Activated CD4-positive, alpha-beta T cell treated with anti-CD3 and anti-CD28 coated beads, Interleukin-2, amount 10 ng/mL, durations not matched to agents 7 days and 5 days (primary cell): ENCODE measurements at regions of chr17 and their contacts with region 1.

Region 1: DNA sequence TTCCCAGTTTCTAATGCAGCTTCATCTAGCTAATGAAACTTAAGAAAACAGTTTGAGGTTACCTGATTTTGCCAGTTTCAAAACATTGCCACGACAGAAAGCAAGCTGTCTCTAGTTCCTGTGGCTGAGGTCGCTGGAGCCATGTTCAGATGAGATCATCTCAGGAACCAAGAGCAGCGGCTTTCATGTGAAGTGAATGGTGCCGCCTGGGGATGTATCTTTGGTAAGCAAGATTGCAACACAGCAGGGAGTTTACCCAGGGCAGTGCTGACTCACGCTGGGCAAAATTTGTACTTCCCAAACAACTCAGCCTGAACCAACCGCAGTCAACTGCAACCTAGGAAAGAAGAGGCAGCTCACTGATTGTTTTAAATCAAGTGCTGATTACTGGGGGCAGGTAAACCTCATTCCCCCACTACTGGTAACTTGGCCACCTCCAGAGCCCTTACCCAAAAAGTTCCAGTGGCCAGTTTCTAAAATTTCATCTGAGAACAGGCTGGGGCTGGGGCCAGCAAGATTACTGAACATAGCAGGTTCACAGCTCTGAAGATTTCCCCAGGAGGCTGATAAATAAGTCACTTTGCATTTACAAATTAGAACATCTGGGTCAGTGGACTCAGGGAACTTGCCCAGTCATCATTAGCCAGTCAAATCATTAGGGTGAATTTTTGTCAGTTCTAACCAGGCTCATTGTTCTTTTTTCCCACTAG is at the start of gene RFFL:
- DNase-seq: peak; percentile 93
- H3K4me3 Mint-ChIP-seq: peak within 1 kb of the TSS; percentile 49
- H3K27ac Mint-ChIP-seq: peak within 1 kb of the TSS; percentile 93
- H3K4me1 Mint-ChIP-seq: peaks cover 57% of the 10 kb centered on the region
- H3K27me3 Mint-ChIP-seq: no peaks in the 10 kb centered on the region
- total RNA-seq, gene RFFL: 36.0 to 40.1 TPM

Region 2: GRCh38 chr17:35051183-35051578 is 12.5 kb before region 1 on chr17:
- CTCF ChIA-PET with region 1: interaction called, 15 read pairs
- POLR2A ChIA-PET with region 1: interaction called, 7 read pairs
- DNase-seq: peak; percentile 68
- H3K4me3 Mint-ChIP-seq: peak overlapping the region; percentile 60
- H3K27ac Mint-ChIP-seq: peak overlapping the region; percentile 93
- H3K4me1 Mint-ChIP-seq: peaks cover 69% of the 10 kb centered on the region
- H3K27me3 Mint-ChIP-seq: no peaks in the 10 kb centered on the region

Region 3: GRCh38 chr17:35073991-35074627 is 10.4 kb after region 1 on chr17:
- CTCF ChIA-PET with region 1: interaction called, 11 read pairs
- POLR2A ChIA-PET with region 1: no interaction called
- DNase-seq: no peak
- H3K4me3 Mint-ChIP-seq: no peak overlapping the region
- H3K27ac Mint-ChIP-seq: peak overlapping the region; percentile 16
- H3K4me1 Mint-ChIP-seq: peaks cover 67% of the 10 kb centered on the region
- H3K27me3 Mint-ChIP-seq: no peaks in the 10 kb centered on the region

Region 4: DNA sequence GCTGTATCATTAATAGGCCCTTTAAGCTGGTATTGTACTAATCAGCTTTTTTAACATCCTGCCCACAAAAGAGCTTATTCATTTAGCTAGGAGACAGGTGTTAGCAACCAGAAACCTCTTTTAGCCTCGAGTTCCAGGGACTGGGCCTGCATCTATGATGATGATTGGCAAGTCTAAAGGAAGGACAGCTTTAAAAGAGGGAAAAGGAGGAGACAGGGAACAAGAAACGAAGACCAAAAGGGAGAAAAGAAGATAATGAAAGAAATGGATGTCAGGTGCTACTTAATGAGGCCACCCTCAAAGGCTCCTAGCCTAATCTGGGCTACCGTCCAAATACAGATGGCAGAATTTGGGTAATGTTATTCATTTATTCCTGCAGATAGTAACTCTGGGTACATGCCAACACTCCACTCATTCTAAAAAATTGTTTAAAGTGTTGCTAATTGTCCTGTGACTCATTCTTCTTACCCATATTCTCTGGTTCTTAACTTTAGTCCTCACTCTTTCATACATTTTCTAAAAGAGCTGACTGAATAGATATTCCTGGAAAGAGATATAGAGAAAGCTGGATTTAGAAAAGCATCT is 18.5 kb after region 1 on chr17:
- CTCF ChIA-PET with region 1: interaction called, 11 read pairs
- POLR2A ChIA-PET with region 1: interaction called, 4 read pairs
- DNase-seq: no peak
- H3K4me3 Mint-ChIP-seq: no peak overlapping the region
- H3K27ac Mint-ChIP-seq: peak overlapping the region; percentile 80
- H3K4me1 Mint-ChIP-seq: peaks cover 78% of the 10 kb centered on the region
- H3K27me3 Mint-ChIP-seq: no peaks in the 10 kb centered on the region

Region 5: DNA sequence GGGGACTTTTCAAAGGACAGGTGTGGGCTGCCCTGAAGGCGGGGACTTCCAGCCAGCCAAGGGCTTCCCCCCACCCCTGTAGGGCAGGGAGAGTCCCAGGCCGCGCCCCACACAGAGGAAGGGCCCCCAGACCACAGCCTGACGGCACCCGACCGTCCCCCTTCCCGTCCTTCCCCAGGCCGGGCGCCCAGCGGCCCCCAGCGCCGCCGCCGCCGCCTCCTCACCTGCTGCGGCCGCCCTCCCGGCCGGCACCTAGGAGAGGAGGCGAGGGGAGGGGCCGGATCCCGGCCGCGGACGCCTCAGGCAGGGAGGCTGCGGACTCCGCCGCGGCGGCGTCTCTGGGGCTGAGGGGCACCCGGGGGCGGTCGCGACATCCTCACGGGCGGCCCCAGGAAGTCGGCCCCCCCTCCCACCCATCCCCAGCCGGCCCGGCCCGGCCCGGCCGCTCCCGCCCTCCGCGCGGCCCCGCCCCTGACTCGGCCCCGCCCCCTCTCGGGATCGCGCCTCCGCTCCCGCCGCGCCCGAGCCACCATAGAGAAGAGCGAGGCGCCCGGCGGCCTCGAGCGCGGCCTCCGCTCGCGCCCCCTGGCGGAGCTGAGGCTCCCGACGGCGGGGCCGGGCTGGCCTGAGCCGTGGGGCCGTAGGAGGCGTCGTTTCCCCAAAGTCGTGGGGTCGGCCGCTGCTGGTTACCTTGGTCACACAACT is 25.4 kb after region 1 on chr17:
- CTCF ChIA-PET with region 1: interaction called, 14 read pairs
- POLR2A ChIA-PET with region 1: interaction called, 5 read pairs
- DNase-seq: peak; percentile 87
- H3K4me3 Mint-ChIP-seq: peak overlapping the region; percentile 87
- H3K27ac Mint-ChIP-seq: peak overlapping the region; percentile 92
- H3K4me1 Mint-ChIP-seq: peaks cover 51% of the 10 kb centered on the region
- H3K27me3 Mint-ChIP-seq: no peaks in the 10 kb centered on the region

Region 6: GRCh38 chr17:35222452-35222851 is 158.8 kb after region 1 on chr17:
- CTCF ChIA-PET with region 1: no interaction called
- POLR2A ChIA-PET with region 1: no interaction called
- DNase-seq: no peak
- H3K4me3 Mint-ChIP-seq: no peak overlapping the region
- H3K27ac Mint-ChIP-seq: no peak overlapping the region
- H3K4me1 Mint-ChIP-seq: peaks cover 46% of the 10 kb centered on the region
- H3K27me3 Mint-ChIP-seq: no peaks in the 10 kb centered on the region